Calu3 (cell line): ENCODE measurements at regions of chr10 and their contacts with region 1.

Region 1: GRCh38 chr10:64271983-64272382 is 750.8 kb downstream of the REEP3 start:
- DNase-seq: peak; percentile 23
- H3K4me3 Mint-ChIP-seq: no peak overlapping the region
- H3K27ac Mint-ChIP-seq: no peak overlapping the region
- H3K4me1 Mint-ChIP-seq: no peaks in the 10 kb centered on the region
- H3K27me3 Mint-ChIP-seq: no peaks in the 10 kb centered on the region
- CTCF ChIP-seq: peak; percentile 19

Region 2: GRCh38 chr10:64219271-64220025 is 52.5 kb before region 1 on chr10:
- CTCF ChIA-PET with region 1: no interaction called
- intact Hi-C with region 1: loop called (anchors 1 kb)
- DNase-seq: no peak
- H3K4me3 Mint-ChIP-seq: no peak overlapping the region
- H3K27ac Mint-ChIP-seq: no peak overlapping the region
- H3K4me1 Mint-ChIP-seq: no peaks in the 10 kb centered on the region
- H3K27me3 Mint-ChIP-seq: no peaks in the 10 kb centered on the region
- CTCF ChIP-seq: no peak

Region 3: DNA sequence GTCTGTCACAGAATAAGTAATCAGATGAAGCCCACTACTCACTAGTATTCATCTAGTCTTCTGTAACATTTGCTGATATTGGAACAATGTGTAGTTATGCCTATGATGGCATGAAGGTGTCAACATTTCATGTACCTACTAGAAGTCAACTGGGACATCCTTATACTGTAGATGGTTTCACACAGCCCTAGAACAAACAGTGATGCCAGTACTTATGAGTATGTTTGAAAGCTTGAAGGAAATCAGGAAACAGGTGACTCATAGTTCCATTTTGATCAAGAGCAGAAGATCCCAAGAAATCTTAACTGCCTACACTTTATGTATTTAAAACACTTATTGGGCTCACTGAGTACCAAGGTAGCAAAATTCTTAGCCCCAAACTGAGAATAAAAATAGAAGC is 768.8 kb after region 1 on chr10:
- CTCF ChIA-PET with region 1: no interaction called
- intact Hi-C with region 1: no loop called
- DNase-seq: no peak
- H3K4me3 Mint-ChIP-seq: no peak overlapping the region
- H3K27ac Mint-ChIP-seq: no peak overlapping the region
- H3K4me1 Mint-ChIP-seq: no peaks in the 10 kb centered on the region
- H3K27me3 Mint-ChIP-seq: no peaks in the 10 kb centered on the region
- CTCF ChIP-seq: no peak